ENCODE measurements at regions of chr15 and their contacts with region 1.

Region 1: GRCh38 chr15:98177924-98178592 is 217.6 kb downstream of the ARRDC4 start:
- DNase-seq: peak; percentile 53
- ATAC-seq: peak; percentile 94
- H3K4me3 Mint-ChIP-seq: no peak overlapping the region
- H3K27ac Mint-ChIP-seq: no peak overlapping the region
- H3K4me1 Mint-ChIP-seq: peaks cover 23% of the 10 kb centered on the region
- H3K27me3 Mint-ChIP-seq: no peaks in the 10 kb centered on the region; the same call in 1 of the 2 replicates
- CTCF ChIP-seq: peak; percentile 42

Region 2: DNA sequence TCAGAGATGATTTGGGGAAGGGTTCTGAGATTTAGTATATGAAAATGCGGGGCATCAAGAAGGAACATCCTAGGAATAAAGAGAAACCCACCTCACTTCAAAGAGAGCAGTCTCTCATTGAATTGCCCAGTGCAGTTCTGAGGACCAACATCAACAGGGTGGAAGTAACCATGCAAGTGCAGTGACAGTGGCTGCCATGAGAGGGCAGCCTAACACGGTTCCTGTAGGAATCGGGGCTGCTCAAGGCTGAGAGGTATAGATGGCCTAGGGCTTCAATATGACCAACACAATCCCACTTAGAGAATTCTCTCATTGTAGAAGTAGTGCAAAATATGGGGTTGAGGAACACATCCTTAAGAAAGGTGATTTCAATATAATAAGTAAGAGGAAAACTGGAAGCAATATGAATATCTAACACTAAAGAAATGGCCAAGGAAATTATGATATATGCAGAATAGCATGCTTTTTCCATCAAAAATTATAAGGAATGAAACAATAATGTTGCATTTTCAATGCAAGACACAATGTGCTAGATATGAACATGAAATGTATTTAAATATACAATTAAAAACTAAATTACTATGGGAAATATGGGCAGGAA is 268.7 kb before region 1 on chr15:
- CTCF ChIA-PET with region 1: interaction called, 34 read pairs
- POLR2A ChIA-PET with region 1: no interaction called
- DNase-seq: peak; percentile 84
- ATAC-seq: peak; percentile 100
- H3K4me3 Mint-ChIP-seq: no peak overlapping the region
- H3K27ac Mint-ChIP-seq: no peak overlapping the region
- H3K4me1 Mint-ChIP-seq: peaks cover 2% of the 10 kb centered on the region
- H3K27me3 Mint-ChIP-seq: peaks cover 1% of the 10 kb centered on the region
- CTCF ChIP-seq: peak; percentile 82

Region 3: GRCh38 chr15:98085003-98085639 is 92.9 kb before region 1 on chr15:
- CTCF ChIA-PET with region 1: interaction called, 18 read pairs
- POLR2A ChIA-PET with region 1: no interaction called
- DNase-seq: no peak
- ATAC-seq: no peak
- H3K4me3 Mint-ChIP-seq: no peak overlapping the region
- H3K27ac Mint-ChIP-seq: no peak overlapping the region
- H3K4me1 Mint-ChIP-seq: peaks cover 13% of the 10 kb centered on the region
- H3K27me3 Mint-ChIP-seq: no peaks in the 10 kb centered on the region
- CTCF ChIP-seq: peak; percentile 36; the same call in 1 of the 2 replicates

Region 4: DNA sequence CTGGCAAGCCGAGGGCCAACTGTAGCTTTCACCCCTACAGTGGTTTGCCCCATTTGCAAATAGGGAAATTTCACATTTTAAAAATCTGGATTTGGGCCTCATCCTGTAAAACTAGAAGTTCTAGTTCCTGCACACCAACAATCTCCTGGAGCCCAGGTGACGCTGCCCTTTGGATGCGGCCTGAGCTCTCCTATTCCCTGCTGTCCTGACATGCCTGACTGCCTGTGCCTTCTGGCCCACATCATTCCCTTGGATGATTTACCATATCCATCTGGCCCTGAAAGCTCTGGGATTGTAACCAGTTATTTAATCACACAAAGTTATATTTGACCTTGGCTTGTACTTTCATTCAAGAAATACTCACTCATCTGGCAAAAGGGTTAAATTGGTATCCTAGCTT is 54.7 kb after region 1 on chr15:
- CTCF ChIA-PET with region 1: no interaction called
- POLR2A ChIA-PET with region 1: no interaction called
- DNase-seq: no peak
- ATAC-seq: no peak
- H3K4me3 Mint-ChIP-seq: no peak overlapping the region
- H3K27ac Mint-ChIP-seq: no peak overlapping the region
- H3K4me1 Mint-ChIP-seq: no peaks in the 10 kb centered on the region
- H3K27me3 Mint-ChIP-seq: no peaks in the 10 kb centered on the region
- CTCF ChIP-seq: no peak

Region 5: DNA sequence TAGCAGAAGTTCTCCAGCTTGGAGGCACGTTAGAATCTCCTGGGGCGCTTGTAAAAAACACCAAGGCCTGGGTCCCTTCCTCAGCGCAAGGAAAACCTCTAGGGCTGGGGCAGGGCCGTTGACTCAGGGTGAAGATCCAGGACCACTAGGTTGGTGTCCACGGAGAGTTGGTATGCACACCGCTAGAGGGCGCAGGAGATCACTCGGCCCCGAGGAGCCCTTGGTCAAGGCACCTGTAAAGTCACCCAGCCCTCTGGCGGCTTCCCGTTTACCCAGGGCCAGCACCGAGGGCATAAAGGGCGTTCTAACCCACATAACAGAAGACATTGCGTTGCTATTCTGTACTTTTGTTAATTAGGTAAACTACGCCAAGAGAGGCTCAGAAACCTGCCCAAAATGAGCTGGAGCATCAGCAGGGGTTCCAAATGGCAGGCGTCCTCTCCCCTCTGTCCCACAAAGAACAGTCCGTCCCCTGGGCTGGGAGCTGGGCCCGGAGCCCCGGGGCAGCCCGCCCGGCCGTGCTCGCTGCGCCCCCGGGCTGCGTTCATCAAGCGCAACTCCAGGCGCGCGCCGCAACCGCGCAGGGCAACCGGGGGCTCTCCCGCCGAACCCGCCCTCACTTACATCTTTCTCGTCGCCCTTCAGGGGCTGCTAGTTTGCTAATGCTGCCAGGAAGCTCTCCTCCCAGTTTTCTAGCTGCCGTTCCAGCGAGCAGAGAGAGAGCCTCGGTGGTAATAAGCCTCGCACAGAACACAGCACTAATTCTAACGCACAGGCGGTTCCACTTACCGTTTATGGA is 114.6 kb after region 1 on chr15:
- CTCF ChIA-PET with region 1: interaction called, 15 read pairs
- POLR2A ChIA-PET with region 1: no interaction called
- DNase-seq: peak; percentile 92
- ATAC-seq: peak; percentile 95
- H3K4me3 Mint-ChIP-seq: peak overlapping the region; percentile 79
- H3K27ac Mint-ChIP-seq: no peak overlapping the region
- H3K4me1 Mint-ChIP-seq: peaks cover 15% of the 10 kb centered on the region
- H3K27me3 Mint-ChIP-seq: peaks cover 17% of the 10 kb centered on the region
- CTCF ChIP-seq: peak; percentile 90

Region 6: DNA sequence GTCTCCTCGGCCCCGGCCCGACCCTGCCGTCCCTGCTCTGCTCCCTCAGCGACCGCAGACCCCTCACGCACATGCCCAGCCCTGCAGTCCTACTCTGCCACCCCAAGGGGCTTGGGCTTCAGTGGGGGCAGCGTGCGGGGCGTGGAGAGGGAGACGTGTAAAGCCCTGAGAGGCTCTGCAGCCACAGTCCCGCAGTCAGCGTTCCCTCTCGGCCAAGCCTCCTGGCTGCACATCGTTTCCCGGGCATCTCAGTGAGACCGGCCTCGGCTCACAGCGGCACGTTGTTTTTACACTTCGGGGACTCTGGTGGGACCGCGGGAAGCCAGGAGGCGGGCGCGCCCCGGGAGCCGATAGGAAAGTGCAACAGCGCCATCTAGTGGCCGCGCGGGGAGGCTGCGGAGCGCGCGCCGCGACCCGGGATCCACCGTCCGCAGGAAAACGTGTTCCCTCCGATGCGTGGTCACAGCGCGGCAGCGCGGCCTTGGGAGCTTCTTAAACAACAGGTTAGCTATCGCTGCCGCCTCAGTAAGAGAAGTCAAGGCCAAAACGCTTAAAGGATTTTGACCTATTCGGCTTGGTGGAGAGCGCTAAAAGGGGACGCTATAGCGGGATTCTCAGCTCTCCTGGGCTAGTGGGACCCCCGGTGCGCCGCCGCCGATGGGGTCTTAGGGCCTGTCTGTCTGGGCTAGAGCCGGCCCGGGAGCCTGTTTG is 243.5 kb after region 1 on chr15:
- CTCF ChIA-PET with region 1: interaction called, 19 read pairs
- POLR2A ChIA-PET with region 1: no interaction called
- DNase-seq: peak; percentile 89
- ATAC-seq: peak; percentile 78
- H3K4me3 Mint-ChIP-seq: peak overlapping the region; percentile 60
- H3K27ac Mint-ChIP-seq: no peak overlapping the region
- H3K4me1 Mint-ChIP-seq: peaks cover 11% of the 10 kb centered on the region
- H3K27me3 Mint-ChIP-seq: peaks cover 45% of the 10 kb centered on the region
- CTCF ChIP-seq: peak; percentile 99

Measured in WTC11 (cell line).